Activated T-helper 1 cell treated with anti-CD3 and anti-CD28 coated beads, Interleukin-12 subunit alpha, Interleukin-12 subunit beta, Interleukin-2, Interleukin-4 antibody, amounts not matched to agents 30 ng/mL and 10 ng/mL and 1 ng/mL, durations not matched to agents 14 hours and 24 hours and 36 hours (primary cell): ENCODE measurements at regions of chr4 and their contacts with region 1.

Region 1: GRCh38 chr4:103099691-103100392 is at the start of gene BDH2:
- DNase-seq: peak; percentile 41
- H3K4me3 Mint-ChIP-seq: peak within 1 kb of the TSS; percentile 84
- H3K27ac Mint-ChIP-seq: peak within 1 kb of the TSS; percentile 86
- H3K4me1 Mint-ChIP-seq: peaks cover 28% of the 10 kb centered on the region
- H3K27me3 Mint-ChIP-seq: no peaks in the 10 kb centered on the region
- total RNA-seq, gene BDH2: 9.1 and 11.0 TPM in 2 replicates

Region 2: GRCh38 chr4:102430461-102430910 is 669.4 kb before region 1 on chr4:
- intact Hi-C with region 1: loop called (anchors 1 kb)
- DNase-seq: no peak
- H3K4me3 Mint-ChIP-seq: peak overlapping the region; percentile 87
- H3K27ac Mint-ChIP-seq: peak overlapping the region; percentile 82
- H3K4me1 Mint-ChIP-seq: peaks cover 15% of the 10 kb centered on the region
- H3K27me3 Mint-ChIP-seq: peaks cover 5% of the 10 kb centered on the region

Region 3: DNA sequence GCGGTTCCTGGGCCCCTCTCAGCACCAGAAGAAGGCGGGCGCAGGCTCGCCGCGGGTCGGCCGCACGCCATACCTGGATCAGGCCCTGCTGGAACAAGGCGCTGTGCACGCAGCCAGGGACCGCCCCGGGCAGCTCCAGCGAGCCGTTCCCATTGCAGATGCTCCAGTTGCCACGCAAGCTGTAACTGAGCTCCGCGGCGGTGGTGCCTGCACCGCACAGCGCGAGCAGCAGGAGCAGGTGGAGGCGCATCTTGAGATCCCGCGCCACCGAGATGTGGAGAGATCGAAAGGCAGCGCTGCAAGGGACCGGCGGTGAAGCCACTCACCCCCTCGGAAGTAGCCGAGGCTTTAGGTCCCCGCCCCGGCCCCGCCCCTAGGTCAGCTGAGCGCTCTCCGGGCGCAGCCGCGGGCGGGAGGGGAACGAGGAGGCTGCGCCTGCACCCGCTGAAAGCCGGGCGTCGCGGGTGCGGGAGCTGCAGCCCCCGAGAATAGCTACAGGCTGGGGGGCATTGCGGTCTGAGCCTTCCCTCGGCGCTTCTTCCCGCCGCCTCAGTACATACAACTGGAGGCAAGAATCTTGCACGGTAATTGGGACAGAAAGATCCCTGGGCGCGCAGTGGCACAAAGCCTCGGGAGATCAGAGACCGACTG is 339.1 kb before region 1 on chr4 and contains the start of gene MANBA:
- intact Hi-C with region 1: loop called (anchors 1 kb)
- DNase-seq: peak; percentile 77
- H3K4me3 Mint-ChIP-seq: peak within 1 kb of the TSS; percentile 96
- H3K27ac Mint-ChIP-seq: peak within 1 kb of the TSS; percentile 90
- H3K4me1 Mint-ChIP-seq: peaks cover 31% of the 10 kb centered on the region
- H3K27me3 Mint-ChIP-seq: peaks cover 13% of the 10 kb centered on the region
- total RNA-seq, gene MANBA: 7.5 and 8.0 TPM in 2 replicates

Region 4: DNA sequence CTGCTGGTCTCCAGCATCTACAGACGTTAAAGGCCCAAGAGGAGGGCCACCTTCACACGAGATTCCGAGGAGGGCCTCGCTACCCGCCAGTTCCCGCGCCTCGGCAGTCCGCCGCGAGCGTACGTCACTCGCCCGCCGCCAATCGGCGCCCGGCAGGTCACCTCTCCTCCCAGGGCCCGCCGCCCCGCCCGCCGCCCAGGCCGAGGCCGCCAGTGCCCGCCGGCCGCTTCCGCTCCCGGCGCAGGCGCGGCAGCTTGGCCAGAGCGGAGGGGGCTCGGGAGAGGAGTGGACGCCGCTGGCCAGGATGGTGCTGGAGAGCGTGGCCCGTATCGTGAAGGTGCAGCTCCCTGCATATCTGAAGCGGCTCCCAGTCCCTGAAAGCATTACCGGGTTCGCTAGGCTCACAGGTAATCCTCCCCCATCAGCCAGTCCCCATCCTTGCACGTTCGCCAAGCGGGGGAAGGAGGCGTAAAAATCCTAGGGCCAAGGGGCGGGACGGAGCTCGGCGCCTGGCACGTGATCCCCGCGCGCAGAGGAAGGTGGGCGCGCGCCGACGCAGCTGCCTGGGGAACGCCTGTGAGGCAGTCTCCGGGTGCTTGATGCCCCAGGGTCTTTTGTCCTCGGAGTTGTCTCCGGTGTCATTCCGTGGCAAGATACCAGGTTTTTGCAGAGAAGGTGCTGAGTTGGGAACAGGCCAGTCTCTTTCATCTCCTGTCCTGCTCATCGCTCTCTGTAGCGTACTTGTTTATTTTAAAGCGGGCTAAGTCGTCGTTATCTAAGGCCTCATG is 230.9 kb before region 1 on chr4 and contains the start of gene CISD2:
- intact Hi-C with region 1: loop called (anchors 2 kb)
- DNase-seq: peak; percentile 91
- H3K4me3 Mint-ChIP-seq: peak within 1 kb of the TSS; percentile 93
- H3K27ac Mint-ChIP-seq: peak within 1 kb of the TSS; percentile 99
- H3K4me1 Mint-ChIP-seq: peaks cover 69% of the 10 kb centered on the region
- H3K27me3 Mint-ChIP-seq: no peaks in the 10 kb centered on the region
- total RNA-seq, gene CISD2: 41.2 and 50.7 TPM in 2 replicates

Region 5: DNA sequence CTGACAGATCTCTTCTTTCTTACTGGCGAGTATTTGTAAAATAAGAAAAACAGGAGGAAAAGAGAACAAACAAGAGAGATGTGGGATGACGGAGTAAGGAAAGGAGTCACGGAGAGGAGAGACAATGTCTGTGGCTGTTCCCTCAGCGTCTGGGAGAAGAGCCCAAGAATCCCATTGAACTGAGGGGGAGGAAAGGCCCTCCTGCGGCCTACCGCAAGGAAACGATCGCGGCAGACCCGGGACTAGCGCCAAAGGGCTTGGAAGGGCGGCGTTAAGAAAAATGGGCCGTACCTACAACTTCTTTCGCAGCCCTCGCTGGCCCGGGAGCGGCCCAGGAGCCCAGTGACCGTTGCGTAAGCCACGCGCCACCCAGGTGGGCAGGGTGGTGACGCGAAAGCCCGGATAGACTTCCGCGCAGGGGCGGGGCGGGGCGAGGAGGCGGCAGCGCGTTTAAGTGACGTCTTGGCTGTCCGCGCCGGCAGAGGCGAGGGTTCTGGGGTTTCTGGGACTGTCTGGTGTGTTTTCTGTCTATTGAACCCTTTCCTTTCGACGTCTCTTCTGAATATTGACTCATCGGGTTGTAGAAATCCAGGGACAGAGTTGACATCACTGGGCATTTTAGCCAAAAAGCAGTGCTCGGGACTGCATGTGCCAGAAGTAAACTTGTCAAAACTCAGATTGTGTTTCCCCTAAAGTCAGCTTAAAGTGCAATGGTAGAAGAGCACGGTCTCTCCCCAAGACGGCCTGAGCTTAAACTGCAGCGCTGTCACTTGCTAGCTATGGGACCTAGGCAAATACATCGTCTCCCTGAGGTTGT is 80.3 kb before region 1 on chr4 and contains the start of gene SLC9B1:
- intact Hi-C with region 1: loop called (anchors 1 kb)
- DNase-seq: peak; percentile 93
- H3K4me3 Mint-ChIP-seq: peak within 1 kb of the TSS; percentile 90
- H3K27ac Mint-ChIP-seq: peak within 1 kb of the TSS; percentile 96
- H3K4me1 Mint-ChIP-seq: peaks cover 25% of the 10 kb centered on the region
- H3K27me3 Mint-ChIP-seq: no peaks in the 10 kb centered on the region
- total RNA-seq, gene SLC9B1: 0.51 and 0.52 TPM in 2 replicates

Region 6: DNA sequence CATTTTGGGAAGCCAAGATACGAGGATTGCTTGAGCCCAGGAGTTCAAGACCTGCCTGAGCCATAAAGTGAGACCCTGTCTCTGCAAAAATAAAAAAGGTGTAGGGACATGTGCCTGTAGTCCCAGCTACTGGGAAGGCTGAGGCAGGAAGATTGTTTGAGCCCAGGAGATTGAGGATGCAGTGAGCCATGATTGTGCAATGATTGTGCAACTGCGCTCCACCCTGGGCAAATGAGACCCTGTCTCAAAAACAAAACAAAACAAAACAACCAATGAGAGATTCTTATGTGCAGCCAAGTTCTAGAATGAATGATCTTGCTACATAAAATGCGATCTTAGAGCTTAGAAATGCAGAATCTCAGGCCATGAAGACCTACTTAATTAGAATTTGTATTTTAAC is 45.8 kb before region 1 on chr4:
- intact Hi-C with region 1: no loop called
- DNase-seq: no peak
- H3K4me3 Mint-ChIP-seq: no peak overlapping the region
- H3K27ac Mint-ChIP-seq: no peak overlapping the region
- H3K4me1 Mint-ChIP-seq: peaks cover 14% of the 10 kb centered on the region
- H3K27me3 Mint-ChIP-seq: no peaks in the 10 kb centered on the region

Region 7: DNA sequence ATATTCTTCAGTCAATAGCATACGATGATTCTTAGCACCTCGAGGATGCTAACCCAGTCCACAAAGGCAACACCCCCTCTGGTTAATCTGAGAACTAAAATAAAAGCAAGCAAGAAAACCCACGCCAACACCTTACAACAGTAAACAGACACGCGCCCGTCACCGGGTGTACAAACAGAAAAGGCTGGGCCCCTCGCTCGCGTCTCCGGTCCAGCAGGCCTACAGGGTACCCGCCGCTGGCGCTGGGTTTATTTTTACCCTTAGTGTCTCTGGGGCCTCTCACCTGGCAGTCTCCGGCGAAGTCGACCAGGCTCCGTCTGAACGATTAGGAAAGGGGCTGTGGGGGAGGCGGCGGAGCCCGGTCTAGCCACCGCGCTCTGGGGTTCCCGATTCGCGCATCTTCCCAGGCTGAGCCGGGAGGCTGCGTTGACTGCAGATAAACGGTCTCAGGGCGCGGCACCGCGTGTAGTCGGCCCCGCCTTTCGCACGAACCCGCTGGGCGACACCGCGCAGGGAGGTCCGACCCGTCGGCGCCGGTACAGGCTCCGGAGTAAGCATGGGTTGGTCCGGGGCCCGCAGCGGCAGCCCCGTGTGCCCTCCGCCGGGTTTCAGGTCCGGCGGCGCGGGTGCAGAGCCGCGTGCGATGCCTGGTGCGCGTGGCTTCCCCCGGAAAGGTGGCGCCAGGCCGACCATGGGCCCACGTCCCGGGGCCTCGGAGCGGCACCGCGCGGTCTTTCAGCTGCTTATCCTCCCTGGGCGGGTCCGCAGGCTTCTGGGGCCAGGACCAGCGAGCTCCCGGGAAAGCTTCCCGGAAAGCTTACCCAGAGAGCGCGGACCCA is 23.7 kb before region 1 on chr4:
- intact Hi-C with region 1: loop called (anchors 1 kb)
- DNase-seq: peak; percentile 60
- H3K4me3 Mint-ChIP-seq: peak overlapping the region; percentile 99
- H3K27ac Mint-ChIP-seq: peak overlapping the region; percentile 100
- H3K4me1 Mint-ChIP-seq: peaks cover 51% of the 10 kb centered on the region
- H3K27me3 Mint-ChIP-seq: no peaks in the 10 kb centered on the region

Region 8: GRCh38 chr4:103118166-103118565 is 18.3 kb after region 1 on chr4:
- intact Hi-C with region 1: no loop called
- DNase-seq: no peak
- H3K4me3 Mint-ChIP-seq: no peak overlapping the region
- H3K27ac Mint-ChIP-seq: no peak overlapping the region
- H3K4me1 Mint-ChIP-seq: no peaks in the 10 kb centered on the region
- H3K27me3 Mint-ChIP-seq: no peaks in the 10 kb centered on the region